ENCODE measurements at regions of chrX and their contacts with region 1.

Region 1: DNA sequence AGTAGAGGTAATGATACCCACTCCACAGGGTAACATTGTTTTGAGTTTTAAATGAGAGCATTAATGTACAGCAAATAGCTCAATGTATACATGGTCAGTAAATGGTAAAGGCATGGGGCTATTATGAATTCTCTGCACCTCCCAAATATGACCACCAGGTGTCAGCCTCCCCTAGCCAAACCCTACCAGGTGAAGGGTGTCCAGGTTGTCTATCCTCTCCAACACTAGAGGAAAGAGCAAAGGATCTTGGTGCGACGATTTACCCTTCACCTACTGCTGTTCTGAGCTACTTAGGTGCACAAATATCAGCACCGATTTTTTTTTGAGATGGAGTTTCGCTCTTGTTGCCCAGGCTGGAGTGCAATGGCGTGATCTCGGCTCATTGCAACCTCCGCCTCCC is 26.5 kb upstream of the XIAP start:
- DNase-seq: peak; percentile 65
- H3K4me3 ChIP-seq: no peak overlapping the region
- H3K27ac ChIP-seq: no peak overlapping the region
- H3K4me1 ChIP-seq: no peaks in the 10 kb centered on the region
- H3K27me3 ChIP-seq: no peaks in the 10 kb centered on the region
- CTCF ChIP-seq: peak; percentile 77

Region 2: GRCh38 chrX:123976706-123977316 is 143.4 kb after region 1 on chrX:
- CTCF ChIA-PET with region 1: interaction called, 16 read pairs
- POLR2A ChIA-PET with region 1: interaction called, 16 read pairs
- intact Hi-C with region 1: no loop called
- DNase-seq: peak; percentile 43
- H3K4me3 ChIP-seq: no peak overlapping the region
- H3K27ac ChIP-seq: no peak overlapping the region
- H3K4me1 ChIP-seq: peaks cover 20% of the 10 kb centered on the region
- H3K27me3 ChIP-seq: no peaks in the 10 kb centered on the region
- CTCF ChIP-seq: peak; percentile 45; the same call in 1 of the 2 replicates

Region 3: DNA sequence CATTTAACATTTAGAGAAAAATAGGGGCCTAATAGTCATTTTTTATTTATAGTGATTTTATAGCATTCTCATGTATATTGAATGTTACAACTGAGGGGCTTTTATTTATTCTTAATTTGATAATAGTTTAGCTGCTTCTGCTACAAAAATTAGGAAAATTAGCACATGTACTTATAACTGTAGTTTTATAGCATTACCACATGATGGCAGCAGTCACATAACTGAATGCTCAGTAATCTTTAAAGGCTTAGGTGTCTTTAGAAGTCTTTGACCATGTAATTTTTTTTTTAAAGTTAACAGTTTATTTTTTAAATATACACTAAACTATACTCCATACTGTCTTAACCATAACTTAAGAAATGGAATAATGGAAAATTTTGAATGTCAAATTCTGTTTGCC is 264.7 kb after region 1 on chrX:
- CTCF ChIA-PET with region 1: no interaction called
- POLR2A ChIA-PET with region 1: no interaction called
- intact Hi-C with region 1: loop called (anchors 10 kb)
- DNase-seq: peak; percentile 55
- H3K4me3 ChIP-seq: no peak overlapping the region
- H3K27ac ChIP-seq: no peak overlapping the region
- H3K4me1 ChIP-seq: peaks cover 3% of the 10 kb centered on the region
- H3K27me3 ChIP-seq: no peaks in the 10 kb centered on the region
- CTCF ChIP-seq: peak; percentile 72

Measured in A673 (cell line).